ENCODE measurements at regions of chr16 and their contacts with region 1.

Region 1: DNA sequence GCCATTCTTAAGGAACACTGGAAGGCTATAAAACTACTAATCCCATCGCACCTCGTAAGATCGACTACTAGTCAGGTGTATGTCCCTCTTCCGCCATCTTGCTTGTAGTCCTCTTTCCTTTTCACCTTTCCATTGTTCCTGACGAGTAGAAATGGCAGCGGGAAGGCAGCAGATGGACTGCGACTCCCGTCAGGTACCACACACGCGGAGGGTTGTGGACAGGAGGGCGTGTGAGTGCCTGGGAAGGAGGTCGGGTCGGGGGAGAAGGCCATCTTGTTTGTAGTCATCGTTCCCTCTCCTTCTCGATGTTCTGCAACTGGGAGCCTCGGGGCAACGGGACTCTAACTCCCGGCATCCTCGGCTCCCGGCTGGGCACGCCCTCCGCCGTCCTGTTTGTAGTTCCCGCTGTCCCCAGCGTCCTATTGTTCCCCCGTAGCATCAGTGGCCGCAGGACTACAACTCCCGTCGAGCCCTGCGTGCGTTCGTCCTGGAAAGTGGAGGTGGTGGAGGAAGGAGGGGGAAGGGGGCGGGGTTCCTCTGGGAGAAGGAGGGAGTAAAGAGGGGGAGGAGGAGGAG is 324 bp upstream of the FBXL19 start:
- DNase-seq: peak; percentile 85 to 98
- ATAC-seq: peak; percentile 67 to 85 (median 72)
- H3K4me3 ChIP-seq: peak overlapping the region; percentile 86
- H3K4me3 Mint-ChIP-seq: peak overlapping the region; percentile 100
- H3K27ac ChIP-seq: peak overlapping the region; percentile 96
- H3K27ac Mint-ChIP-seq: peak overlapping the region; percentile 99 to 100
- H3K4me1 ChIP-seq: peaks cover 21% of the 10 kb centered on the region
- H3K4me1 Mint-ChIP-seq: peaks cover 15 to 38% of the 10 kb centered on the region in 2 donors
- H3K27me3 ChIP-seq: no peaks in the 10 kb centered on the region
- H3K27me3 Mint-ChIP-seq: no peaks in the 10 kb centered on the region
- CTCF ChIP-seq: no peak

Region 2: DNA sequence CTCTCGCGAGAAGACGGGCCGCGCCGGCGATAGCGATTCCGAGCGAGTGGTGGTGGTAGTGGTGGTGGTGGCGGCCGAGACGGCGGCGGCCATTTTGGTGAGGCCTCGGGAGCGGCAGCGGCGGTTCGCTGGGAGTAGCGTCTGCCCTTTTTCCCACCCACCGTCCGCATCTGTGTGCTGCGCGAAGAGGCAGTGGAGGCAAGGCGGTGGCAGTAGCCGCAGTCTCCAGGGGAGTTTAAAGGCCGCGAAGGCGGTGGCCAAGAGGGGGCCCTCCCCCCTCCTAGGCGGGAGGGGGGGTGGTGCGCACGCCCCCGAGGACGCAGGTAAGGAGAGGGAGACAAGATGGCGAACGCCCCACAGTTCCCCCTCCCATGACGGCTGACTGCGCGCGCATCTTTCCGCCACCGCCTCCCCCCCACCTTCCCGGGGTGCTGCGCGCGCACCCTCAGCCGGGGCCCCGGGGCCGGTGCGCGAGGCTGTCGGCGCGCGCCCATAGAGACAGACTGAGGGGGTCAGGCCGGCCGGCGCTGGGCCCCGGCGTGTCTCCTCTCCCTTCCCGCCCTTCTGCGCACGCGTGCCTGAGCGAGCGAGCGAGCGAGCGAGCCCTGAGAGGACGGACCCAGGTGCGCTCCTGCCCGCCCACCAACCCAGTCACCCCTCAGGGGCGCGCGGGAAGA is 224.8 kb before region 1 on chr16:
- intact Hi-C with region 1: loop called (anchors 5 kb)
- DNase-seq: peak; percentile 97 to 99
- ATAC-seq: peak; percentile 72 to 88 (median 75)
- H3K4me3 ChIP-seq: peak overlapping the region; percentile 89
- H3K4me3 Mint-ChIP-seq: peak overlapping the region; percentile 94
- H3K27ac ChIP-seq: peak overlapping the region; percentile 99
- H3K27ac Mint-ChIP-seq: peak overlapping the region; percentile 98 to 100
- H3K4me1 ChIP-seq: peaks cover 26% of the 10 kb centered on the region
- H3K4me1 Mint-ChIP-seq: peaks cover 36 to 46% of the 10 kb centered on the region in 2 donors
- H3K27me3 ChIP-seq: no peaks in the 10 kb centered on the region
- H3K27me3 Mint-ChIP-seq: no peaks in the 10 kb centered on the region
- CTCF ChIP-seq: no peak

Region 3: DNA sequence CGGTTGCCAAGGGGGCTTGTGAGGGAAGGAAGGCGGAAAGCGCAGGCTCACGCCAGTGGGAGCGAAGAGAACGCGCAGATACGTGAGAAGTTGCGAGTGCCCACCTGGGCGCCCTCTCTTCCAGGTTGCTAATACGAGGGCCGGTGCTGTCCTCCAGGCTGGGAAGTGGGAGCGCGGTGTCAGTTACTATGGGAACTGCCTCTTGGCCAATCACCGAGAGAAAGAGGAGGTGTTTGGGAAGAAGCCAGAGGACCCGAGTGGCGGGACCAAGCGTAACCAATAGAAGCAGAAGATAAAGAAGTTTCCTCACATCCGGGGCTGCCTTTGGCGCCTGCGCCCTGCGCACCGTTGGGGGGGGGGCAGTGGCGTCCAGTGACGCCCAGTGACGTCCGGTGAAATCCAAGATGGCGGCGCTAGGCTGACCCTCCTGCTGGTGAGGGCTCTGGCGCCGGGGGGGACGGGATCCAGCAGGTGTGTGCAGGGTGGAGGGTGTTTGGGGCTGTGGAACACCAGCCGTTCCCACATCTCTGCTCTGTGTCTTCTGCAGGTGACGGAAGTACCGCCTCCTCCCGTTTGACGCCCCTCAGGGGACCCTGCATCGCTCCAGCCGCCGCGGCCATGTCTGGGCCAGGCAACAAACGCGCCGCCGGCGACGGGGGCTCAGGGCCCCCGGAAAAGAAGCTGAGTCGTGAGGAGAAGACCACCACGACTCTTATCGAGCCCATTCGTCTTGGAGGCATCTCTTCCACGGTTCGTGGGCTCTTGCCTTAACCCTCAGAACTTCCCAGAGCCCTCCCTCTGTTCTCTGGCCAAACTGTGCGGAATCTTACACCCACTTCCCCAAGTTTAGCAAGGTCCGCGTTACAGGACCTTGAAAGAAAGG is 160.9 kb before region 1 on chr16 and contains the starts of genes CFAP119 and RNF40:
- intact Hi-C with region 1: loop called (anchors 5 kb)
- DNase-seq: peak; percentile 84 to 95
- ATAC-seq: peak; percentile 94 to 97 (median 95)
- H3K4me3 ChIP-seq: peak within 1 kb of the TSS; percentile 80
- H3K4me3 Mint-ChIP-seq: peak within 1 kb of the TSS; percentile 95
- H3K27ac ChIP-seq: peak within 1 kb of the TSS; percentile 77
- H3K27ac Mint-ChIP-seq: peak within 1 kb of the TSS; percentile 92
- H3K4me1 ChIP-seq: peaks cover 57% of the 10 kb centered on the region
- H3K4me1 Mint-ChIP-seq: peaks cover 35 to 55% of the 10 kb centered on the region in 2 donors
- H3K27me3 ChIP-seq: no peaks in the 10 kb centered on the region
- H3K27me3 Mint-ChIP-seq: no peaks in the 10 kb centered on the region
- CTCF ChIP-seq: no peak
- total RNA-seq, gene CFAP119: 3.4 to 5.1 (median 4.9) TPM
- total RNA-seq, gene RNF40: 153 to 167 (median 161) TPM

Region 4: DNA sequence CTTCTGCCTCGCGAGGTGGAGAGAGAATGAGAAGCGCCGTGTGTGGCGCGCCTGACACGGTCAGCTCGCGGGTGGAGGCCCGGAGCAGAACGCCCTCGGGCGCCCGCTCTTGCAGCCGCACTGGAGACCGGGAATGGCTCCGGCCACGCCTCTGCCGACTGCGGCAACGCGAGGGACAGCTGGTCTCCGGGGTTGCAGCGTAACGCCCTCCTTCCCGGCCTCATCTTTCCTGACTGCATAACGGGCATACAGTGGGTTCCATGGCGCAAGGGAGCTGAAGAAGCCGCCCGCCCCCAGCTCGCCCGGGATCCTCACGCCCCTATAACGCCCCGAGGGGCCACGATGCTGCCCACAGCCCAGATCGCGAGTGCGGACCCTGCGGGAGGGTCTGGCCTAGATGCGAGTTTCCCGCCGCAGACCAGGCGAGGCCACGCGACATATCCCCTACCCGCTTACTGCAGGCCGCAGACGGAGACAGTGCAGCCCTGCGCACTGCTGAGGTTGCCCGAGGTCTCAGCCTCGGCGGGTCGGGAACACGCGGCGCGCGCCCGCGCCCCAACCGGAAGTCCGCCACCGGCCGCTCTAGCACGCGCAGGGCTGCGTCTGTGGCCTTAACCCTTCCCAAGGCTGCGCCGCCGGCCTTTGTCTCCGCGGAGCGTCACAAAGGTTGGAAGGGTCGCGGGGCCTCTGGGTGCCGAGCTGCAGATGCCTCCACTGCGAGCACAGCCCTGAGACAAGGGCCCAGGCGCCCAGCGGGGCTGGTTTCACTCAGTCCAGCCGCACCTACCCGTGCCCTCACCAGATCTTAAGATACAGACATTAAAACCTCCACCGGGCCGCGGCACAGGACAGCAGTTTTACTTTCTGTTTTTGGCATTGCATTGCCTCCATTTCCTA is 48.0 kb before region 1 on chr16:
- intact Hi-C with region 1: loop called (anchors 2 kb)
- DNase-seq: peak; percentile 89 to 94
- ATAC-seq: peak; percentile 69 to 94 (median 86)
- H3K4me3 ChIP-seq: peak overlapping the region; percentile 71
- H3K4me3 Mint-ChIP-seq: peak overlapping the region; percentile 97
- H3K27ac ChIP-seq: peak overlapping the region; percentile 83
- H3K27ac Mint-ChIP-seq: peak overlapping the region; percentile 92 to 99
- H3K4me1 ChIP-seq: peaks cover 43% of the 10 kb centered on the region
- H3K4me1 Mint-ChIP-seq: peaks cover 39 to 54% of the 10 kb centered on the region in 2 donors
- H3K27me3 ChIP-seq: no peaks in the 10 kb centered on the region
- H3K27me3 Mint-ChIP-seq: no peaks in the 10 kb centered on the region
- CTCF ChIP-seq: no peak

Region 5: DNA sequence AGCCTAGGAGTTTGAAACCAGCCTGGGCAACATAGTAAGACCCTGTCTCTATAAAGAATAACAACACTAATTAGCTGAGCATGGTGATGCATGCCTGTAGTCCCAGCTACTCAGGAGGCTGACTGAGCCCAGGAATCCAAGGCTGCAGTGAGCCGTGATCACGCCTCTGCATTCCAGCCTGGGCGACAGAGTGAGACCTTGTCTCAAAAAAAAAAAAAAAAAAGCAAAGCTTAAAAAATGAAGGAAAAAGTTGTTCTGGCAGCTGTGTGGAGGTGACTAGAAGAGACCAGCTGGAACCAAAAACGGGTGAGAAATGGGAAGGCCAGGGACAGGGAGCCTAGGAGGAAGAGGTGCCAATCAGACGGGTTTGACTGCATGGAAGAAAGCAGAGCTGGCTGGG is 33.3 kb before region 1 on chr16:
- intact Hi-C with region 1: no loop called
- DNase-seq: no peak
- ATAC-seq: no peak
- H3K4me3 ChIP-seq: no peak overlapping the region
- H3K4me3 Mint-ChIP-seq: no peak overlapping the region
- H3K27ac ChIP-seq: no peak overlapping the region
- H3K27ac Mint-ChIP-seq: peak overlapping the region in 1 of 2 donors; percentile 41
- H3K4me1 ChIP-seq: peaks cover 20% of the 10 kb centered on the region
- H3K4me1 Mint-ChIP-seq: peaks cover 18 to 34% of the 10 kb centered on the region in 2 donors
- H3K27me3 ChIP-seq: no peaks in the 10 kb centered on the region
- H3K27me3 Mint-ChIP-seq: no peaks in the 10 kb centered on the region
- CTCF ChIP-seq: no peak

Region 6: GRCh38 chr16:30904114-30904780 is 18.8 kb before region 1 on chr16:
- intact Hi-C with region 1: no loop called
- DNase-seq: peak in 1 of 2 donors; percentile 23
- ATAC-seq: no peak
- H3K4me3 ChIP-seq: no peak overlapping the region
- H3K4me3 Mint-ChIP-seq: no peak overlapping the region
- H3K27ac ChIP-seq: peak overlapping the region; percentile 85
- H3K27ac Mint-ChIP-seq: peak overlapping the region; percentile 96 to 99
- H3K4me1 ChIP-seq: peaks cover 47% of the 10 kb centered on the region
- H3K4me1 Mint-ChIP-seq: peaks cover 29 to 31% of the 10 kb centered on the region in 2 donors
- H3K27me3 ChIP-seq: no peaks in the 10 kb centered on the region
- H3K27me3 Mint-ChIP-seq: no peaks in the 10 kb centered on the region
- CTCF ChIP-seq: no peak

Region 7: DNA sequence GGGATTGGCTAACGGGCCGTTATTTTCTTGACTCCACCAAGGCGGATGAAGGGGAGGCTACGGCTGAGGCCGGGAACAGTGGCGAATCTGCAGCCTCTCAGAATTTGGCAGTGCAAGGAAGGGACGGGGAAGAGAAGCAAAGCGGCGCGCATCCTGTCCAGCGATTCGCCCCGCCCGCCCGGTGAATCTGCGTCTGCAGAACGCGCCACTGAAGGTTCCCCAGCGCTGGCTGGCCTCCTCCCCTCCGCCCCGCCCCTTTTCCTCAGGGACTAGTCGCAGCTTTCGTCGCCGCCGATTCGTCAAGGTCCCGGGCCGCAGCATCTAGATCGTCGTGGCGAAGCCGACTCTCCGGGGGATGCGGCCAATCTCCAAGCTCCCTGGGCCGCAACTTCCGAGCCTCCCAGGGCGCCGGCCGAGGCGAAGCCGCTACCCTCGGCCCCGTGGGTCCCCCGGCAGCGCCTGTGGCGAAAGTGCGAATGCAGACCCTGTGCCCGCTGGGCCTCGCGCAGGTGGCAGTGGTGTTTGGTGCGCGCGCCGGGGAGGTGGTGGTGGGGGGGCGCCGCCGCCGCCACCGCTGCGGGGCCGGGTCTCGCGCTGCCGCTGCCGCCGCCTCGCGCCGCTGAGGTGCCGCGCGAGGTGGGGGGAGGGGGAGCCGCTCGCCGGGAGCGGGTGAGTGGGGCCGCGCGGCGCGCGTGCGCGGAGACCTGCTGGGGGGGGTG is 34.6 kb after region 1 on chr16 and contains the start of gene SETD1A:
- intact Hi-C with region 1: loop called (anchors 2 kb)
- DNase-seq: peak; percentile 95 to 98
- ATAC-seq: peak; percentile 88 to 95 (median 90)
- H3K4me3 ChIP-seq: peak within 1 kb of the TSS; percentile 71
- H3K4me3 Mint-ChIP-seq: peak within 1 kb of the TSS; percentile 94
- H3K27ac ChIP-seq: peak within 1 kb of the TSS; percentile 99
- H3K27ac Mint-ChIP-seq: peak within 1 kb of the TSS; percentile 93 to 94
- H3K4me1 ChIP-seq: peaks cover 24% of the 10 kb centered on the region
- H3K4me1 Mint-ChIP-seq: peaks cover 30 to 34% of the 10 kb centered on the region in 2 donors
- H3K27me3 ChIP-seq: no peaks in the 10 kb centered on the region
- H3K27me3 Mint-ChIP-seq: no peaks in the 10 kb centered on the region
- CTCF ChIP-seq: no peak
- total RNA-seq, gene SETD1A: 32.9 to 34.5 (median 33.9) TPM